Aorta (tissue), 5 donors: ENCODE measurements at regions of chr7 and their contacts with region 1.

Region 1: GRCh38 chr7:91264046-91264923 is at the start of gene FZD1:
- DNase-seq: peak; percentile 98 to 99
- ATAC-seq: peak; percentile 94
- H3K4me3 ChIP-seq: peak within 1 kb of the TSS; percentile 79 to 92
- H3K27ac ChIP-seq: peak within 1 kb of the TSS; percentile 72 to 74
- H3K4me1 ChIP-seq: no peaks in the 10 kb centered on the region
- H3K27me3 ChIP-seq: no peaks in the 10 kb centered on the region
- total RNA-seq, gene FZD1: 38.5 to 49.2 TPM

Region 2: GRCh38 chr7:91089382-91089963 is 174.8 kb before region 1 on chr7:
- intact Hi-C with region 1: loop called (anchors 5 to 10 kb)
- DNase-seq: no peak
- ATAC-seq: peak; percentile 74
- H3K4me3 ChIP-seq: peak overlapping the region; percentile 41 to 69
- H3K27ac ChIP-seq: no peak overlapping the region
- H3K4me1 ChIP-seq: no peaks in the 10 kb centered on the region
- H3K27me3 ChIP-seq: no peaks in the 10 kb centered on the region

Region 3: DNA sequence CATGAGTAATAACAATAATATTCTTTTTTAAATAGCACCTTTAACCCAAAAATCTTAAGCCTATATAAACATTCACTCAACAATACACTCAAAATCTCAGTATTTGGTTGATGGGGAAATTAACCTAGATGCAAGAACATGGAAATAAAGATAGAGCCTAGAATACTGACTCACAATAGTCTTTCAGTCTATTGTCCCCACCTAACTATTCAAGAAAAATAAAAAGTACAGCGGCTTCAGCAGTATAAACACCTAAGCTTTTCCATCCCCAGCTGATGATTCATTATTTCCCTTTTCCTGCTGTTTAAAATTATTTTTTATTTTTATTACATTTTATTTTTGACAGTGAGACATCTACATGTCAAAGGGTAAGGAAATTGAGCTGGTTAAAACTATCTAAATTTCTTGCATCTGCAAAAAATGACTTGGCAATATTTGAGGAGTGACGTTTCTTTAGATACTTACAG is 201.3 kb after region 1 on chr7:
- intact Hi-C with region 1: loop called in 1 of 2 experiments (anchors 5 kb)
- DNase-seq: no peak
- ATAC-seq: no peak
- H3K4me3 ChIP-seq: no peak overlapping the region
- H3K27ac ChIP-seq: no peak overlapping the region
- H3K4me1 ChIP-seq: peaks cover 0 to 7% of the 10 kb centered on the region in 2 donors
- H3K27me3 ChIP-seq: no peaks in the 10 kb centered on the region

Region 4: GRCh38 chr7:91551377-91552175 is 287.3 kb after region 1 on chr7:
- intact Hi-C with region 1: loop called in 1 of 2 experiments (anchors 5 kb)
- DNase-seq: no peak
- ATAC-seq: no peak
- H3K4me3 ChIP-seq: no peak overlapping the region
- H3K27ac ChIP-seq: no peak overlapping the region
- H3K4me1 ChIP-seq: peaks cover 1 to 3% of the 10 kb centered on the region in 2 donors
- H3K27me3 ChIP-seq: no peaks in the 10 kb centered on the region

Region 5: GRCh38 chr7:91636129-91636724 is 371.9 kb after region 1 on chr7:
- intact Hi-C with region 1: loop called in 1 of 2 experiments (anchors 10 kb)
- DNase-seq: no peak
- ATAC-seq: no peak
- H3K4me3 ChIP-seq: no peak overlapping the region
- H3K27ac ChIP-seq: no peak overlapping the region
- H3K4me1 ChIP-seq: no peaks in the 10 kb centered on the region
- H3K27me3 ChIP-seq: no peaks in the 10 kb centered on the region